ENCODE measurements at regions of chr3 and their contacts with region 1.

Region 1: DNA sequence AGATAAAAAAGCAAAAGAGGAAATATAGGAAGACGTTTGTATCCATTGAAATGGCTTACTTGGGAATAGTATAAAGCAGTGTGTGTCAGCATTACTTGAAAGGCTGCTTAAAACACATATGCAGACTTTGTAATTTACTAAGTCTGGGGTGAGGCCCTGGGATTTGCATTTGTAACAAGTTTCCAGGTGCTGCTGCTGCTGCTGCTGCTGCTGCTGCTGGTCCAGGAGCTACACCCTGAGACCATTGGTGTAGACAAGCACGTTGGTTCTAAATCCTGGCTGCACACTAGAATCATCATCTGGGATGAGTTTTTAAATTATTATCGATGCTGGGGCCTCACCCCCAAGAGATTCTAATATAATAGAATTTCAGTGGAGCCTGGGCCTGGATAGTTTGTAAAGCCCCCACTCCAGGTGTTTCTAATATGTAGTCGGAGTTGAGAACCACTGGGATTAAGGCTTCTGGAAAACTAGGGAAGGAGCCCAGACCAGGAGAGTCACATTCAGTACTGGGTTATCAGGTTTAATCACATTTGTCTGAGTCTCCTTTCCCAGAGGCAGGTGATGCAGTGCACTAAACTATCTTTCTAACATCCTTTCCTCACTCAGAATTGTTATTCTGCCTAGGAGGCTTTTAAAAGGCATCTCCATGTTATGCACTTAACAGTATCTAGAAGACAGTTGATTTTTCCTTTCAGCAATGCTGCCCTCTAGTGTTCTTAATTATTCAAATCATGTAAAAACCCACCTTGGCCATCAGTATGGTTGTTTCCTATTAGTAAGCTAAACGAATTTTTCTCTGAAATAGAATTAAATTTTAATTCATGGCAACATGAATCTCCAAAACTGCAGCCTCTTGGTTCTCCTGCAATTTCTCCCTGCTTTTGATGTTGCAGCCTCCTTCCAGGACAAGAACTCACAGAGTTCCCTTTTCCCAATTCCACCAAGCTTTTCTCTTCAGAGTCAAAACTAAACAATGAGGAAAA is 45.4 kb downstream of the SSR3 start:
- DNase-seq: peak; percentile 66
- ATAC-seq: peak; percentile 57
- H3K4me3 ChIP-seq: no peak overlapping the region
- H3K4me3 Mint-ChIP-seq: no peak overlapping the region
- H3K27ac ChIP-seq: no peak overlapping the region
- H3K27ac Mint-ChIP-seq: no peak overlapping the region
- H3K4me1 ChIP-seq: no peaks in the 10 kb centered on the region
- H3K4me1 Mint-ChIP-seq: no peaks in the 10 kb centered on the region
- H3K27me3 ChIP-seq: peaks cover 0 to 4% (median 2%) of the 10 kb centered on the region in 4 experiments
- H3K27me3 Mint-ChIP-seq: peaks cover 23% of the 10 kb centered on the region
- CTCF ChIP-seq: peak; percentile 81

Region 2: GRCh38 chr3:156151824-156152428 is 357.6 kb before region 1 on chr3:
- CTCF ChIA-PET with region 1: interaction called, 123 read pairs
- POLR2A ChIA-PET with region 1: no interaction called
- intact Hi-C with region 1: loop called (anchors 1 kb)
- DNase-seq: peak; percentile 47
- ATAC-seq: peak; percentile 28
- H3K4me3 ChIP-seq: no peak overlapping the region
- H3K4me3 Mint-ChIP-seq: no peak overlapping the region
- H3K27ac ChIP-seq: no peak overlapping the region
- H3K27ac Mint-ChIP-seq: no peak overlapping the region
- H3K4me1 ChIP-seq: no peaks in the 10 kb centered on the region
- H3K4me1 Mint-ChIP-seq: peaks cover 7% of the 10 kb centered on the region
- H3K27me3 ChIP-seq: peaks cover 0 to 1% (median 0%) of the 10 kb centered on the region in 4 experiments
- H3K27me3 Mint-ChIP-seq: peaks cover 15% of the 10 kb centered on the region
- CTCF ChIP-seq: peak; percentile 76

Region 3: DNA sequence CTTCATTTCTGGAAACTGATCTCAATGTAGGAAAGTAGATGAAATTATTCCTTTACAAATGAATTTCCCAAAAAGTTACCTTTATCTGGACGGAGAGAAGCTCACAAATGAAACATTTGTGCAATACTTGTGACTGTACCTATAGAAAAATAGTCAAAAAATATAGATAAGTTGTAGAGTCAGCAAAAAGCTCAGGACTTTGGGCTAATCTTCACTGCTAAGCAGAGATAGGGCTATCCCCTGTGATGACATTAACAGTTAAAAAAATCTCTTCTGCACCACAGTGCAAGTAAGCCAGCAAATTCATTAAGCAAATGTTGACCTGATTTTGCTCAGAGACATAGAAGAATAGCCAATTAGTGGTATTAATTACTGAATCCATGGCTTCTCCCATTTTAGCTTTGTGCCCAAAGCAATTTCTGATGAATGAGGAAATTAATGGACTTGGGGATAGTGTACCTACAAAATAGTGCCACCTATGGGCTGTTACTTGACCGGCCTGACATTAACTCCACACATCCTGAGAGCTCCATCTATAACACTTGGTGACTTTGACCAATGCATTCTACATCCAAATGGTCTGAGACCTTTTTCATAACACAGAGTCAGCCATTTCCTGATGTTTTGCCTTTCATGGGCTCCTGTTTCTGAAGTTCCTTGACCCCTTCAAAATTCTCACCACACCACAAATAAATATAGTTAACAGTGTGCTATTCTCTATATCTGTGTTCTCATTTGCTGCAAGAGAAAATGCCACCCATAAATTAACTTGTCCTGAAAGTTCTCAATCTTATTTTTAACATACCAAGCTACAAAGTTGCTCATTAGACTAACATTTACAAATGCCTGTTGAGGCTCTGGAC is 59.5 kb before region 1 on chr3:
- CTCF ChIA-PET with region 1: interaction called, 16 read pairs
- POLR2A ChIA-PET with region 1: no interaction called
- intact Hi-C with region 1: loop called (anchors 1 kb)
- DNase-seq: peak; percentile 12
- ATAC-seq: no peak
- H3K4me3 ChIP-seq: no peak overlapping the region
- H3K4me3 Mint-ChIP-seq: no peak overlapping the region
- H3K27ac ChIP-seq: no peak overlapping the region
- H3K27ac Mint-ChIP-seq: no peak overlapping the region
- H3K4me1 ChIP-seq: peaks cover 4% of the 10 kb centered on the region in 2 donors
- H3K4me1 Mint-ChIP-seq: peaks cover 9% of the 10 kb centered on the region
- H3K27me3 ChIP-seq: no peaks in the 10 kb centered on the region
- H3K27me3 Mint-ChIP-seq: peaks cover 16% of the 10 kb centered on the region
- CTCF ChIP-seq: peak; percentile 44

Region 4: DNA sequence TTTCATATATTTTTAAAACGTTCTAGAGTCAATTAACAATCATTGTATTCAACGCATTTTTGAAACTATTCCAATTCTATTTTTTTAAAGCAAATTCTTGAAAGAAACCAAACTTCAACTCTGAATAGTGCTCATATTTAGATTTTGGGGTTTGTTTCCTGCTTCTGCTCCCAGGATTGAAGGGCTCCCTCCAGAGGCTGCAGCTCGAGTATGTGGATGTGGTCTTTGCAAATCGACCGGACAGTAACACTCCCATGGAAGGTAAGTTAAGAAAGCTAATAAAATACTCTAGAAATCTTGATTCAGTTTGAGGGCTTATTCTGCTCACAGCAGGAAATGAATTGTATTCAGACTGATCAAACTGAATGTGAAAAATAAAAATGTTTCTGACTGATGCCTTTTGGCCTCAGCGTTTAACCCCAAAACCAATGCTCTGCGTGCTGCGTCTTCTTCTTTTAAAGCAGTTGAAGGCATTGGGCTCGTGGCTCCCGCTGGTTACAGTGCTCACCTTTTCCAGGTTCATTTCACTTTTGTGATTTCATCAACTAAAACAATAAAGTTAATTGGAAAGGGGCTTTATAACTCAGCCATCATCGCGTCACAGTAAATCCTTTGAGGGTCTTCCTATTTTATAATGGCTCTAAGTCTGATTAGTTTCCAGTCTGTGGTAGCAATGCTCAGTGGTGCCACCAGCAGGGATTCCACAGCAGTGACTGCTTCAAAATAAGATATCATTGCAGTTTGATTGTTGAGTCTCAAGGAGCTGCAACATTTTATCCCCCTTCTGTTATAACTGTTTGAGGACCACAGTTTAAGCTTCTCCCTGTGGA is 34.7 kb before region 1 on chr3:
- CTCF ChIA-PET with region 1: interaction called, 42 read pairs
- POLR2A ChIA-PET with region 1: no interaction called
- intact Hi-C with region 1: loop called (anchors 1 kb)
- DNase-seq: no peak
- ATAC-seq: no peak
- H3K4me3 ChIP-seq: no peak overlapping the region
- H3K4me3 Mint-ChIP-seq: no peak overlapping the region
- H3K27ac ChIP-seq: no peak overlapping the region
- H3K27ac Mint-ChIP-seq: no peak overlapping the region
- H3K4me1 ChIP-seq: no peaks in the 10 kb centered on the region
- H3K4me1 Mint-ChIP-seq: no peaks in the 10 kb centered on the region
- H3K27me3 ChIP-seq: peaks cover 0 to 6% (median 2%) of the 10 kb centered on the region in 4 experiments
- H3K27me3 Mint-ChIP-seq: peaks cover 25% of the 10 kb centered on the region
- CTCF ChIP-seq: peak; percentile 37

Region 5: GRCh38 chr3:156536524-156537231 is 27.2 kb after region 1 on chr3:
- CTCF ChIA-PET with region 1: interaction called, 6 read pairs
- POLR2A ChIA-PET with region 1: no interaction called
- intact Hi-C with region 1: loop called (anchors 2 kb)
- DNase-seq: no peak
- ATAC-seq: no peak
- H3K4me3 ChIP-seq: no peak overlapping the region
- H3K4me3 Mint-ChIP-seq: no peak overlapping the region
- H3K27ac ChIP-seq: no peak overlapping the region
- H3K27ac Mint-ChIP-seq: no peak overlapping the region
- H3K4me1 ChIP-seq: no peaks in the 10 kb centered on the region
- H3K4me1 Mint-ChIP-seq: no peaks in the 10 kb centered on the region
- H3K27me3 ChIP-seq: no peaks in the 10 kb centered on the region
- H3K27me3 Mint-ChIP-seq: no peaks in the 10 kb centered on the region
- CTCF ChIP-seq: no peak